Mucosa of descending colon (tissue), 3 donors: ENCODE measurements at regions of chr3 and their contacts with region 1.

Region 1: DNA sequence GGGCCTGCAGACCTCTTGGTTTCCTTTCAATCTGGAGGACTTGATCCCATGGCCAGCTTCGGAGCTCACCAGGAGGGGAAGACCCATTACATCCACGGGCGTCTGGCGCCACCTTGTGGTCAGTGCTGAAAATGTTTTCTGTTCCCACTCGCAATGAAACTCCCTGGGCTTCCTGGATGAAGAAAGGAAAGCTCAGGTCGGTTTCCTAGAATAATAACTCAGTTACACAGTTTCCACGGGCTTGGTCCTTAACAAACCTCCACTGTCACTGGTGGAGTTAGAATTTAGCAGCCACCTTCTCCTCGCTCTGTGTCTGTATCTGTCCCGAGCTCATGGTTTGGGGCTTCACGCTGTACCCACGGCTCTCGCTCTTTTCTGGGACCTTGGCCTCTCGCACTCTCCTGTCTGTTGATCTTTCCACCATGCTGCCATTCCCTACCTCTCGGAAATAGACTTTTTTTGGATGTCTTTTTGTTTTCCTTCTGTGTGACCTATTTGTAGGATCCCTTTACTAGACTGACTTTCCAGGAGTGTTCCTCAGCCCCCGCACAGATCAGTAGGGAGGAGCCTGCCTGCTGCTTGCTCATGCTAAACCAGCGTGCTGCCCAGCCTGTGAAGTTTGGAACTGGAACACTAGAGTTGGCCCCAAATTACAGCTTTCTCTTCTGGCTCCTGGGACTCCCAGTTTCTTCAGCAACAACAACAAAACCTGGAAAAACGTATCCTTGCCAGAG is 56.3 kb downstream of the IL20RB start:
- DNase-seq: peak; percentile 86 to 95 (median 94)
- ATAC-seq: peak; percentile 99
- H3K4me3 ChIP-seq: no peak overlapping the region
- H3K4me1 ChIP-seq: peaks cover 3% of the 10 kb centered on the region
- CTCF ChIP-seq: peak; percentile 64

Region 2: GRCh38 chr3:136075218-136075808 is 938.8 kb before region 1 on chr3:
- intact Hi-C with region 1: loop called (anchors 10 kb)
- DNase-seq: peak in 2 of 3 donors; percentile 49 to 87
- ATAC-seq: peak; percentile 93
- H3K4me3 ChIP-seq: no peak overlapping the region
- H3K4me1 ChIP-seq: no peaks in the 10 kb centered on the region
- CTCF ChIP-seq: peak; percentile 80

Region 3: GRCh38 chr3:136390574-136390973 is 623.5 kb before region 1 on chr3:
- intact Hi-C with region 1: loop called (anchors 5 to 10 kb)
- DNase-seq: no peak
- ATAC-seq: no peak
- H3K4me3 ChIP-seq: no peak overlapping the region
- H3K4me1 ChIP-seq: no peaks in the 10 kb centered on the region
- CTCF ChIP-seq: no peak

Region 4: DNA sequence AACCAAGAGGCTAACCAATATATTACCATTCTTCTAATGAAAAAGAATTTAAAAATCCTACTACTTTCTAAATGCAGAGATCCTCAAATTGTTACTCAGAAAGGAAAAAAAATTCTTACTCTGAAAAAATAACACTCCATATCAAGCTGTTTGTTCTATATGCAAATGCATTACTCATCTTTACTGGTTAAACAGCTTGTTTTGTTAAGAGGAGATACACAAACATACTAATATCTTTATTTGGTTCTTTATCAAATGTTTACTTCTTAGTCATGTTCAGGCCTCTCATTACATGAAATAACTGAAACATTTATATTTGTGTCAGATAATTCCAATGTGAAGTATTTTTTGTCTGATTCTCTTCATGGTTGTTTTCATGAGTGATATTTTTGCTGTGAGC is 617.2 kb before region 1 on chr3:
- intact Hi-C with region 1: loop called (anchors 5 to 10 kb)
- DNase-seq: no peak
- ATAC-seq: no peak
- H3K4me3 ChIP-seq: no peak overlapping the region
- H3K4me1 ChIP-seq: no peaks in the 10 kb centered on the region
- CTCF ChIP-seq: no peak

Region 5: GRCh38 chr3:136752422-136753325 is 261.4 kb before region 1 on chr3:
- intact Hi-C with region 1: loop called (anchors 2 to 5 kb)
- DNase-seq: peak; percentile 99 to 100 (median 100)
- ATAC-seq: peak; percentile 90
- H3K4me3 ChIP-seq: peak overlapping the region; percentile 82
- H3K4me1 ChIP-seq: peaks cover 11% of the 10 kb centered on the region
- CTCF ChIP-seq: no peak